Activated B cell treated with CpG ODN at 0.5 μM for 24 hours (primary cell): ENCODE measurements at regions of chr15 and their contacts with region 1.

Region 1: GRCh38 chr15:38563723-38564519 is 693 bp downstream of the RASGRP1 start:
- DNase-seq: peak; percentile 87
- ATAC-seq: peak; percentile 78
- H3K4me3 Mint-ChIP-seq: peak overlapping the region; percentile 90
- H3K27ac Mint-ChIP-seq: peak overlapping the region; percentile 88
- H3K4me1 Mint-ChIP-seq: peaks cover 50% of the 10 kb centered on the region
- H3K27me3 Mint-ChIP-seq: no peaks in the 10 kb centered on the region
- CTCF ChIP-seq: no peak

Region 2: DNA sequence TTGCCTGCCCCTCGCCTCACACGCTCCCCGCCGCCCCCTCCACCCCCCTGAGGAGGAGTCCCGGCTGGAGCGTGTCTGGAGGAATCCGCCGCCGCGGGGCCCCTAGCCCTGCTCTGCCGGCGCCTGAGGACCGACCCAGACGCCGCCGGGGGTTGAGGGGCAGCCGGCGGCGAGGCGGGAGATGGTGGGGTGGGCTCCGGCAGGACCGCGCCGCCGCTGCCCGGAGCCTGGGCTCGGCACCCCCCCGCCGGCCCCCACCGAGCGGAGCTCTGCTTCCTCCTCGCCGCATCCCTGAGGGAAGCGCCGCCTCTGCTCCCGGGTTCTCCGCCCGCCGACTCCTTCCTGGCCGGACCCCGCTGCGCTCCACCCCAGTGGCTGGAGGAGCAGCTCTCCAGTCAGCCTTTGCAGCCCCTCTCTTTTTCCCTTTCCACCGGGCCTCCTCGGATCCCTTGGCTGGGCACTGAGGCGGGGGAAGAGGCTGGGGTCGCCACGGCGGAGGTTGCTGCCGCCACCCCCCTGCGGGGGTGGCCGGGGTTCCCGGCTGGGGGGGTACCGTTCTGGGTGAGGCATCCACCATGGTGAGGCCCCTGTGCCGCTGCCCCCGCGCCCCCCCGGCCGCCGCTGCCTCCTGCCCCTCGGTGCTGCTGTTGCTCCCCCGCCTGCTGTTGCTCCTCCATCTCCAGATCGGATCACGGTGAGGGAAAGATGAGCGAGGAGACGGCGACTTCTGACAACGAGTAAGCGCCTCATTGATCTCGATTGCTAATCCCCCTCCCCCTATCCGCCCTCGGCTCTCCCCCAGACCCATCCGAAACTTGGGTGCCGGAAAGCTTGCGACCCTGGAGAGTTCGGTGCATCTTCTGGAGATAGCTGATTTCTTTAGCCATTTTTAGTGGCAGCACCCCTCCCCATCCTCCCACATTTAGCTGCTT is 311.2 kb before region 1 on chr15 and contains the start of gene SPRED1:
- CTCF ChIA-PET with region 1: no interaction called
- POLR2A ChIA-PET with region 1: no interaction called
- intact Hi-C with region 1: loop called (anchors 1 kb)
- DNase-seq: no peak
- ATAC-seq: peak; percentile 11
- H3K4me3 Mint-ChIP-seq: peak within 1 kb of the TSS; percentile 94
- H3K27ac Mint-ChIP-seq: peak within 1 kb of the TSS; percentile 84
- H3K4me1 Mint-ChIP-seq: peaks cover 32% of the 10 kb centered on the region
- H3K27me3 Mint-ChIP-seq: peaks cover 1% of the 10 kb centered on the region
- CTCF ChIP-seq: no peak
- total RNA-seq, gene SPRED1: 1.3 and 1.4 TPM in 2 replicates

Region 3: DNA sequence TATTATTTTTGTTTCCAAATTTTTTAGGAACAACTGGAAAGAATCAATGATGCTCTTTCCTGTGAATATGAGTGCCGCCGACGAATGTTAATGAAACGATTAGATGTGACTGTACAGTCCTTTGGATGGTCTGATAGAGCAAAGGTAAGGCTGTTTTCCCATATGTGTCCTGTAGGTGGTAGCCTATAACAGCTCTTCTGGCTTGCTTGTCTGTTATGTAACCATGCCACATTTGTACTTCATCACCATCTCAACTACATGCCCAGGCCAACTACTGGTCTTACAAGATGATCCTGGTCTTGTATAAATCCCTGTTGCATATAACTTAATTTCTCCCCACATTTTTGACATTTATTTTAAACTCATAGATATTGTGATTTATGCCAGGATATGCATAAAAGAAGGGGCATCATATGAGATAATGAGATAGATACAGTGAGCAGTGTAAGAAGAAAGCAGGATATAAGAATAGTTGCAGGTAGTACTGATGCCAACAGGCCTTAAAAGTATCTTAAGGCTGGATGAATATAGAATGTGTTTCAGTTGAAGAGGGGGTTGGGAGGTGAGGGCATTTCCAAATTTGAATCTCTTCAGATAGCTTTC is 89.7 kb before region 1 on chr15:
- CTCF ChIA-PET with region 1: interaction called, 25 read pairs
- POLR2A ChIA-PET with region 1: interaction called, 3 read pairs
- intact Hi-C with region 1: loop called (anchors 1 kb)
- DNase-seq: no peak
- ATAC-seq: peak; percentile 100
- H3K4me3 Mint-ChIP-seq: no peak overlapping the region
- H3K27ac Mint-ChIP-seq: no peak overlapping the region
- H3K4me1 Mint-ChIP-seq: no peaks in the 10 kb centered on the region
- H3K27me3 Mint-ChIP-seq: no peaks in the 10 kb centered on the region
- CTCF ChIP-seq: no peak

Region 4: DNA sequence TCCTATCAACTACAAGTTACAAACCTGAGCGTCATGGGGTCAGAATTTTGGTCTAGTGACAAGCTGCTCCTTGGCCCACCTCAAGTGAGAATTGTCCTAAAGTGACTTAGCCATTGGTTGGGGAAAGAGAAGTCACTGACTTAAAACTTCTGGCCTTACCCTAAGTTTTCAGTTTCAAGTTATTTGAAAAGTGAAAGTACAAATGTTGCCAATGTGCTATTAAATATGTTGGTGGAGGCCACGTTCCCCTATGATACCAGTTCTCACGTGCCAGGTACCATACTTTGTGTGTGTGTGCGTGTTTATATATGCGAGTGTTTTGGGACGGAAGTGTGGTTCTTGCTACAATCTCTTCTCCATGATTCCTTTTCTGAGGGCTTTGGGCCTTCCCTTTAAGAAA is 23.3 kb after region 1 on chr15:
- CTCF ChIA-PET with region 1: interaction called, 9 read pairs
- POLR2A ChIA-PET with region 1: interaction called, 3 read pairs
- intact Hi-C with region 1: loop called (anchors 2 kb)
- DNase-seq: no peak
- ATAC-seq: no peak
- H3K4me3 Mint-ChIP-seq: no peak overlapping the region
- H3K27ac Mint-ChIP-seq: peak overlapping the region; percentile 50
- H3K4me1 Mint-ChIP-seq: peaks cover 14% of the 10 kb centered on the region
- H3K27me3 Mint-ChIP-seq: no peaks in the 10 kb centered on the region
- CTCF ChIP-seq: no peak

Region 5: GRCh38 chr15:38660738-38661137 is 96.8 kb after region 1 on chr15:
- CTCF ChIA-PET with region 1: interaction called, 10 read pairs
- POLR2A ChIA-PET with region 1: no interaction called
- intact Hi-C with region 1: no loop called
- DNase-seq: no peak
- ATAC-seq: no peak
- H3K4me3 Mint-ChIP-seq: no peak overlapping the region
- H3K27ac Mint-ChIP-seq: no peak overlapping the region
- H3K4me1 Mint-ChIP-seq: peaks cover 22% of the 10 kb centered on the region
- H3K27me3 Mint-ChIP-seq: no peaks in the 10 kb centered on the region
- CTCF ChIP-seq: no peak

Region 6: GRCh38 chr15:38690689-38691332 is 126.9 kb after region 1 on chr15:
- CTCF ChIA-PET with region 1: interaction called, 138 read pairs
- POLR2A ChIA-PET with region 1: interaction called, 135 read pairs
- intact Hi-C with region 1: loop called (anchors 2 kb)
- DNase-seq: peak; percentile 38
- ATAC-seq: peak; percentile 89
- H3K4me3 Mint-ChIP-seq: no peak overlapping the region
- H3K27ac Mint-ChIP-seq: no peak overlapping the region
- H3K4me1 Mint-ChIP-seq: peaks cover 14% of the 10 kb centered on the region
- H3K27me3 Mint-ChIP-seq: no peaks in the 10 kb centered on the region
- CTCF ChIP-seq: no peak

Region 7: DNA sequence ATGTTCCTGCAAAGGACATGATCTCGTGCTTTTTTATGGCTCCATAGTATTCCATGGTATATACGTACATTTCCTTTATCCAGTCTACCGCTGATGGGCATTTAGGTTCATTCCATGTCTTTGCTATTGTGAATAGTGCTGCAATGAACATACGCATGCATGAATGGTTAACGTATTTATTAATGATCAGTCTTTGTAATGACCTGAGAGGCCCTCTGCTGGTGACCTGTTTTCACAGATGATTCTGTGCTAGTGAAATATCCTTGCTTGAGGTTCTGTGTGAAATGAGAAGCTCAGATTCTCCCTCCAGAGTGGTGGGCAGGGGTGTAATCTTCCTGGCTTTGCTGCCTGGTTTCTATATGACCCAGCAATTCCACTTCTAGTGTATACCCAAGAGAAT is 160.9 kb after region 1 on chr15:
- CTCF ChIA-PET with region 1: no interaction called
- POLR2A ChIA-PET with region 1: no interaction called
- intact Hi-C with region 1: no loop called
- DNase-seq: no peak
- ATAC-seq: no peak
- H3K4me3 Mint-ChIP-seq: no peak overlapping the region
- H3K27ac Mint-ChIP-seq: no peak overlapping the region
- H3K4me1 Mint-ChIP-seq: no peaks in the 10 kb centered on the region
- H3K27me3 Mint-ChIP-seq: peaks cover 6% of the 10 kb centered on the region
- CTCF ChIP-seq: no peak